ENCODE measurements at regions of chr6 and their contacts with region 1.

Region 1: GRCh38 chr6:5250911-5251310 is 9.8 kb downstream of the LYRM4 start:
- DNase-seq: no peak
- H3K4me3 ChIP-seq: no peak overlapping the region
- H3K27ac ChIP-seq: no peak overlapping the region
- H3K4me1 ChIP-seq: no peaks in the 10 kb centered on the region
- H3K27me3 ChIP-seq: no peaks in the 10 kb centered on the region
- CTCF ChIP-seq: no peak

Region 2: DNA sequence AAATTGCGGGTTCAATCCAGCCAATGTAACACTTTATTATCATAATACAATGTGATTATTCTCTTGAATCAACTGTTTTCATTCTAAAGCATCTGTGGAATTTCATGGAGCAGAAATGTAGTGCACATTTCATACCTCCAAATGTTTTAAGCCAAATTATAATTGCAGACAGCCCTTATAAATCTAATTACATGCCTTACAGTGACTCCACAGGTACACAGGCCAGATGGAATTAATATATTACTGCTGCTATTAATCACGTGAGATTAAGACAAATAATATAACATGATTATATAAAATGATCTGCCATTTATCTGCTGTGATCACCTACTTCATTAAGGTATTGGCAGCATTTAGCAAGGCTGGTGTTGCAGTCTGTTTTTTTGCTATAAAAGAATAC is 1105.8 kb before region 1 on chr6:
- intact Hi-C with region 1: loop called (anchors 10 kb)
- DNase-seq: no peak
- H3K4me3 ChIP-seq: no peak overlapping the region
- H3K27ac ChIP-seq: no peak overlapping the region
- H3K4me1 ChIP-seq: no peaks in the 10 kb centered on the region
- H3K27me3 ChIP-seq: no peaks in the 10 kb centered on the region
- CTCF ChIP-seq: no peak

Measured in ascending aorta (tissue), 2 donors.